GM12878 (cell line): ENCODE measurements at regions of chr12 and their contacts with region 1.

Region 1: DNA sequence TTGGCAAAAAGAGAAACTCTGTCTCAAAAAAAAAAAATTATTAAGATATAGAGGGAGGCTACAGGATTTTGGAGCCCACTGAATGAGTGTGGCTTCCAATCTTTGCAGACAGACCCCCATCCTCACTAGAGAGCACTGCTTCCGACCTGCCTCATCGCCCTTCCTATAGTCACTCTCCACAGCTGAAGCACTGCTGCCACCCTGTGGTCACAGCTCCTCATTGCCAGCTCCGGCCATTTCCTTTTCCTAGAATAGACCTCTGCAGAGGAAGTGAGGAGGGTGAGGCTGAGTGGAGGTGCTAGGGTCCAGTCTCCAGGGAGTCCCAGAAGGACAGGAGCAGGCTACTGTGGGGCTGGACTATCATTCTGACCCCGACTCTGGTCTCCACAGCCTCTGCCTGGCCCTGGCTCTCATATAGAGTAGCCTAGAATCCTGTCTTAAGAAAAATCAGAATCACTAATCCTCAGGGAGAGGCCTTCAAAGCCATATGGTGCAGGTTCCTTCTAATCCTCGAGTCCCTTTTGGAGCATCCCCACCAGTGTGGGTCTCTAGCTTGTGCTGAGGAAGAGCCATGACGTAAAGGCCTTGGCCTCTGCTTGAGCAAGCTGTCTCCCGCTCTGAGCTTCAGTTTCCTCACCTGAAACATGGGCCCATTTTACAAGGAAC is 1.4 kb upstream of the NPFF start:
- DNase-seq: peak; percentile 60
- ATAC-seq: peak; percentile 99
- H3K4me3 ChIP-seq: no peak overlapping the region
- H3K27ac ChIP-seq: no peak overlapping the region
- H3K4me1 ChIP-seq: 0 out of 2 replicates have a peak, but pooled peaks cover 3% of the 10 kb centered on the region
- H3K27me3 ChIP-seq: no peaks in the 10 kb centered on the region
- CTCF ChIP-seq: peak; percentile 94 to 99 (median 96); a peak in 5 of 6 replicates
- EP300 ChIP-seq: no peak
- POLR2A ChIP-seq: no peak
- RAD21 ChIP-seq: peak; percentile 97

Region 2: DNA sequence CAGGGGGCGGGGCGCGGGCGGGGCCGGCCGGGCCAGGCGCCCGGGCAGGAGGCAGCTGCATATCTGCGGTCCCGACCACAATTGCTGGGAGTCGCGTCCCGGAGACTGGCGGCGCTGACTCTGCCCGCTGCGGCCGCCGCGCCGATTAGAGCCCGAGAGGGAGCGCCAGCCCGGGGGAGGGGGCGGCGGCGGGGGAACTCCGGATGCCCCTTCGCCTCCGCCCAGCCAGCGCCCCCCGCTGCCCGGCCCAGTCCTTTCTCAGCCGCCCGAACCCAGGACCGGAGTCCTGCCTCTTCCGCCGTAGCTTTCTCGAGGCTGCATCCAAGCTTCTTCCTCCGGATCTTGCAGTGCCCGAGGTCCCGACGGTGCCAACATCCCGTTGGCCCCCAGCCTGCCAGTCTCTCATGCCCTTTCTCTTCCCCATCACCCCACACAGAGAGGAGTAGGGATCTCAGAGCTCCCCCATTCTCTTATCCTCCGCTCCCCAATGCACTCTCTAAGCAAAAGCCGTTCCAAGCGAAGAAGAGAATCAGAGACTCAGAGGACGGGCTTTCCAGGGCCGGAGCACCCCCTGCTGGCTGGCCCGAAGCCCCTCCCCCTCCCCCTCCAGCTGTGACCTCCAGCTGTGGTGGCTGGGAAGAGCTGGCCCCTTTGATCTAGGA is 163.7 kb before region 1 on chr12:
- CTCF ChIA-PET with region 1: interaction called, 55 read pairs
- POLR2A ChIA-PET with region 1: no interaction called
- RAD21 ChIA-PET with region 1: interaction called, 6 read pairs
- SMC1A ChIA-PET with region 1: interaction called, 4 read pairs
- in situ Hi-C with region 1: no loop called
- intact Hi-C with region 1: no loop called
- DNase-seq: no peak
- ATAC-seq: peak; percentile 95
- H3K4me3 ChIP-seq: peak overlapping the region; percentile 80
- H3K27ac ChIP-seq: no peak overlapping the region
- H3K4me1 ChIP-seq: peaks cover 5% of the 10 kb centered on the region
- H3K27me3 ChIP-seq: peaks cover 0 to 5% of the 10 kb centered on the region in 2 experiments; a peak in 1 of 4 replicates
- CTCF ChIP-seq: peak; percentile 68 to 90 (median 87)
- EP300 ChIP-seq: no peak
- POLR2A ChIP-seq: 0 out of 2 replicates have a peak, but pooled peaks have one; percentile 32
- RAD21 ChIP-seq: peak; percentile 81

Region 3: GRCh38 chr12:53379389-53380103 is 129.1 kb before region 1 on chr12:
- CTCF ChIA-PET with region 1: interaction called, 10 read pairs
- POLR2A ChIA-PET with region 1: interaction called, 4 read pairs
- RAD21 ChIA-PET with region 1: interaction called, 5 read pairs
- SMC1A ChIA-PET with region 1: interaction called, 3 read pairs
- in situ Hi-C with region 1: no loop called
- intact Hi-C with region 1: no loop called
- DNase-seq: peak; percentile 100
- ATAC-seq: peak; percentile 84
- H3K4me3 ChIP-seq: peak overlapping the region; percentile 62
- H3K27ac ChIP-seq: peak overlapping the region; percentile 89
- H3K4me1 ChIP-seq: peaks cover 25% of the 10 kb centered on the region
- H3K27me3 ChIP-seq: no peaks in the 10 kb centered on the region
- CTCF ChIP-seq: no peak
- EP300 ChIP-seq: no peak
- POLR2A ChIP-seq: peak; percentile 97
- RAD21 ChIP-seq: no peak

Region 4: GRCh38 chr12:53427905-53428594 is 80.6 kb before region 1 on chr12:
- CTCF ChIA-PET with region 1: interaction called, 37 read pairs
- POLR2A ChIA-PET with region 1: no interaction called
- RAD21 ChIA-PET with region 1: interaction called, 12 read pairs
- SMC1A ChIA-PET with region 1: interaction called, 12 read pairs
- in situ Hi-C with region 1: no loop called
- intact Hi-C with region 1: no loop called
- DNase-seq: no peak
- ATAC-seq: peak; percentile 56
- H3K4me3 ChIP-seq: no peak overlapping the region
- H3K27ac ChIP-seq: no peak overlapping the region
- H3K4me1 ChIP-seq: no peaks in the 10 kb centered on the region
- H3K27me3 ChIP-seq: no peaks in the 10 kb centered on the region
- CTCF ChIP-seq: no peak
- EP300 ChIP-seq: no peak
- POLR2A ChIP-seq: no peak
- RAD21 ChIP-seq: no peak

Region 5: DNA sequence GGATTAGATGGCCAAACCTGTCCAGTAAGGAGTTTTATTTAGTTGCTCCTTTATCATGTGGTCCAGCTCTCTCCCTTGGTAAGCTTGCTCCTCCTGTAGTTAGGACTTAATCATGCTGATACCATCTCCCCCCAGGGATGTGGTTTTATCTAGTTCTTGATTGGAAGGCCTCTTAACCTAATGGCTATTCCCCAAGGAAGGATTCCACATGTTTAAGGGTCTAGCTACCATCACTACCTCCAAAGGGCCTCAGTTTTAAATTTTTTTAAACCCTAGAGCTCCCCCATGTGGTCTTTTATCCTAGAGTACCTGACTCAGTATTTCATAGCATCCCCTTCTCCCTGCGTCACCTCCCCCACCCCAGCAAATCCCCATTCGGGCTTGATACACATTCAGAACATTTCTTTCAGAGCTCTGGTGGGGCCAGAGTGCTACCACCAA is 31.9 kb before region 1 on chr12:
- CTCF ChIA-PET with region 1: interaction called, 27 read pairs
- POLR2A ChIA-PET with region 1: interaction called, 3 read pairs
- RAD21 ChIA-PET with region 1: interaction called, 6 read pairs
- SMC1A ChIA-PET with region 1: interaction called, 32 read pairs
- in situ Hi-C with region 1: no loop called
- intact Hi-C with region 1: no loop called
- DNase-seq: no peak
- ATAC-seq: peak; percentile 60
- H3K4me3 ChIP-seq: no peak overlapping the region
- H3K27ac ChIP-seq: no peak overlapping the region
- H3K4me1 ChIP-seq: 0 out of 2 replicates have a peak, but pooled peaks cover 2% of the 10 kb centered on the region
- H3K27me3 ChIP-seq: no peaks in the 10 kb centered on the region
- CTCF ChIP-seq: peak in 2 of 3 experiments; percentile 10 to 34; a peak in 2 of 6 replicates
- EP300 ChIP-seq: no peak
- POLR2A ChIP-seq: no peak
- RAD21 ChIP-seq: no peak

Region 6: GRCh38 chr12:53481957-53482586 is 26.6 kb before region 1 on chr12:
- CTCF ChIA-PET with region 1: interaction called, 13 read pairs
- POLR2A ChIA-PET with region 1: interaction called, 3 read pairs
- RAD21 ChIA-PET with region 1: interaction called, 4 read pairs
- SMC1A ChIA-PET with region 1: interaction called, 32 read pairs
- in situ Hi-C with region 1: no loop called
- intact Hi-C with region 1: no loop called
- DNase-seq: no peak
- ATAC-seq: peak; percentile 59
- H3K4me3 ChIP-seq: no peak overlapping the region
- H3K27ac ChIP-seq: no peak overlapping the region
- H3K4me1 ChIP-seq: no peaks in the 10 kb centered on the region
- H3K27me3 ChIP-seq: no peaks in the 10 kb centered on the region
- CTCF ChIP-seq: peak in 2 of 3 experiments; percentile 31 to 35; a peak in 3 of 6 replicates
- EP300 ChIP-seq: no peak
- POLR2A ChIP-seq: 0 out of 2 replicates have a peak, but pooled peaks have one; percentile 22
- RAD21 ChIP-seq: 0 out of 2 replicates have a peak, but pooled peaks have one; percentile 11

Region 7: GRCh38 chr12:53492830-53493611 is 15.6 kb before region 1 on chr12:
- CTCF ChIA-PET with region 1: interaction called, 19 read pairs
- POLR2A ChIA-PET with region 1: interaction called, 9 read pairs
- RAD21 ChIA-PET with region 1: interaction called, 7 read pairs
- SMC1A ChIA-PET with region 1: interaction called, 11 read pairs
- in situ Hi-C with region 1: no loop called
- intact Hi-C with region 1: no loop called
- DNase-seq: peak; percentile 46
- ATAC-seq: peak; percentile 96
- H3K4me3 ChIP-seq: peak overlapping the region; percentile 87
- H3K27ac ChIP-seq: peak overlapping the region; percentile 46; the same call in 1 of the 2 replicates
- H3K4me1 ChIP-seq: peaks cover 10% of the 10 kb centered on the region
- H3K27me3 ChIP-seq: no peaks in the 10 kb centered on the region
- CTCF ChIP-seq: no peak
- EP300 ChIP-seq: no peak
- POLR2A ChIP-seq: peak; percentile 83
- RAD21 ChIP-seq: no peak

Region 8: DNA sequence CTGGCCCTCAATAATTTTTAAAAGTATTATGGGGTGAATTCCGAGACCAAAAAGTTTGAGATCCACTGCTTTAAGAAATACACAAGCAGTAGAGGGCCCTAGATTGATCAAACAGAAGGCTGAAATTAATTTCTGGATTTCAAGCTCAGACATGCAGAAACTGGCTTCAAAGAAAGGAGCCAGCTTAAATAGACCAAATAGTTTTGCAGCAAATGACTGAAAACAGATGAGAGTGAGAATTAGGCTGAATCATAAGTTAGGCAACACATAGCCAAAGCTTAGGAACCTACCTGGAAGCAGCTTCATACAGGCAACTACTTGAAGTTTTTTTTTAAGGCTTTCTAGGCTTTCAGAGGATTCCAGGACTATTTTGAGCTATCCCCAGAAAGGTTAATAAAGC is 105.2 kb after region 1 on chr12:
- CTCF ChIA-PET with region 1: no interaction called
- POLR2A ChIA-PET with region 1: no interaction called
- RAD21 ChIA-PET with region 1: no interaction called
- SMC1A ChIA-PET with region 1: no interaction called
- in situ Hi-C with region 1: no loop called
- intact Hi-C with region 1: no loop called
- DNase-seq: no peak
- ATAC-seq: no peak
- H3K4me3 ChIP-seq: no peak overlapping the region
- H3K27ac ChIP-seq: no peak overlapping the region; the same call in 1 of the 2 replicates
- H3K4me1 ChIP-seq: peaks cover 25% of the 10 kb centered on the region
- H3K27me3 ChIP-seq: no peaks in the 10 kb centered on the region
- CTCF ChIP-seq: no peak
- EP300 ChIP-seq: no peak
- POLR2A ChIP-seq: no peak
- RAD21 ChIP-seq: no peak

Region 9: DNA sequence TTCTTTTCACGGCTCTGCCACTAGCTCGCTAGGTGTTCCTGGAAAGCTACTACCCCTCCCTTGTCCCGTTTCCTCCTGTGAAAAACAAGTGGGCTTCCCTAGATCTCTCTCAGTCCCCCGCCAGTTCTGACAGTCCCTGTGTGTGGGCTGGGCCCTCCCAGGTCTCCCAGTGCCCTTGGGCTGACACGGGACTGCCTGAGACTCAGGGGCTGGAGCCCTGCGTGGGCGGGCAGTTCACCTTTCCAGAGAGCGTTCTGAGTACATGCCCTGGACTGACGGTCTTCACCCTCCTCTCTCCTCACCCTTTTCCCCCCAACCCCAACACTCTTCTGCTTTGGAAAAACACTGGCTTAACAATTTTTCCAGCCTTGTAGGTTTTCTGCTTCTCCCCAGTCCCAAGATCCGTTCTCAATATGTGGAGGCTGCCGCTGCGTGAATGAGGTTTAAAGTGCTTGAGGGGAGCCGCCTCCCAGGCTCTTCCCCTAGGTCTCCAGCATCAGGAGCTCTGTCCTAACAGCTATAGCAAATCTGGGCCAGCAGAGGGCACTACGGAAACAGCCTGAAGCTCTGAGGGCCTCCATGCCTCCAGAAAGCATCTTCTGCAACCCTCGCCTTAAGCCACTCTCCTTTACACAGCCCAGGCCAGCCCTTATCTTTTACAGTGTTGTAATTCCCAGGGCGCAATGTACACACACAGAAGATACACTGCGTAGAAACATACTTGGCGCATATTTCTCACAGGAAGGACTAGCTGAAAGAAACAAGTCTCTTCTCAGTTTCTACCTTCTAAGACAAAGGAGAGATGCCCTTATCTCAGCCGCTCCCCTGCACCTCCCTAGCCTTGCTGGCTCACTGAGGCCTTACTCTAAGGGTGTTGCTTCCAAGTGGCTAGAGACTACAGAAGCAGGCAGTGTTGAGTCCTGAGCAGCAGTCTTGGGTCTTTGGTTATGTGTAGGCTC is 1149.9 kb after region 1 on chr12:
- CTCF ChIA-PET with region 1: no interaction called
- POLR2A ChIA-PET with region 1: no interaction called
- RAD21 ChIA-PET with region 1: no interaction called
- SMC1A ChIA-PET with region 1: no interaction called
- in situ Hi-C with region 1: no loop called
- intact Hi-C with region 1: no loop called
- DNase-seq: no peak
- ATAC-seq: peak; percentile 93
- H3K4me3 ChIP-seq: no peak overlapping the region
- H3K27ac ChIP-seq: no peak overlapping the region
- H3K4me1 ChIP-seq: no peaks in the 10 kb centered on the region
- H3K27me3 ChIP-seq: peaks cover 0 to 2% of the 10 kb centered on the region in 2 experiments; a peak in 2 of 4 replicates
- CTCF ChIP-seq: peak; percentile 68 to 81 (median 70)
- EP300 ChIP-seq: no peak
- POLR2A ChIP-seq: no peak
- RAD21 ChIP-seq: peak; percentile 51